ENCODE measurements at regions of chr4 and their contacts with region 1.

Region 1: DNA sequence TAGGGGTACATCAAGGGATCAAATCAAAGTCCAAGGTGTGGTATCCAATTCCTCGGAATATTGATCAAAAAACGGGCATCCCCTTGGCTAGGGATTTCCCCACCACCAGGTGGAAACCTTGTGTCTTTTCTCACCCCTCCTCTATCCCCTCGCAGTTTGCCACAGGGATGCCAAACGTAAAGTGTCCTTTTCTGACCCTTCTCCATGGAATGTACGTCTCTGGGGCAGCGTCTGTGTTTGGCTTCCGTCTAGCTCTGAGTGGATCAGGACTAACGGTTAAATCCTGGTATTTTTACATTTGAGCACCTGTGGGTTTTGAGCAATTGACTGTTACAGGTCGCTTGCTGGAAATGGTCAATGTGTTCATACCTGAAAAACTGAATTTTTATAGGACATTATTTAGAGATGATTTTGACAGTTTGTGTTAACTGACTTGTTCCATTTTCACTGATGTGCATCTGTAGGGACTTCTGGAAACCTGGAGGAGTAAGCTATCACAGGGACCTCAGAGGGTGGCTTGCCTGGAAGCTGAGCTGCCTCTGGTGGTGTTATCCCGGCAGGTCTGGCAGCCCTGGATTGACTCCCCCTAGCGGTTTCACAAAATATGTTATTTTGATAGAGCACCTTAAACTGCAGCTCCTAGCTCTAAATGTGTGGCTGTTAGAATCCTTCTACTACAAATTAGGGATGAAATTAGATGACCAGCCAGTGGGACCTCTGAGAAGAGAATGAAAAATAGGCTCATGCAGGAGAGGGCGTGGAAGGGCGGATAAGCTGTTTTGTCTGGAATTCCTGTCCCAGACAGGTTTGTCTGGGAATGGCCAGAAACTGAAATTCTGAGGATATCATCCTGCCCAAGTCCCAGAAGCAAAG is 8.8 kb upstream of the MGST2 start:
- DNase-seq: peak; percentile 63
- H3K4me3 Mint-ChIP-seq: peak overlapping the region; percentile 61
- H3K27ac Mint-ChIP-seq: peak overlapping the region; percentile 93
- H3K4me1 Mint-ChIP-seq: peaks cover 28% of the 10 kb centered on the region
- H3K27me3 Mint-ChIP-seq: peaks cover 7% of the 10 kb centered on the region

Region 2: GRCh38 chr4:139301113-139301820 is 355.6 kb before region 1 on chr4 and contains the start of gene NAA15:
- CTCF ChIA-PET with region 1: no interaction called
- POLR2A ChIA-PET with region 1: no interaction called
- intact Hi-C with region 1: loop called (anchors 2 kb)
- DNase-seq: peak; percentile 99
- H3K4me3 Mint-ChIP-seq: peak within 1 kb of the TSS; percentile 100
- H3K27ac Mint-ChIP-seq: peak within 1 kb of the TSS; percentile 100
- H3K4me1 Mint-ChIP-seq: peaks cover 51% of the 10 kb centered on the region
- H3K27me3 Mint-ChIP-seq: no peaks in the 10 kb centered on the region
- total RNA-seq, gene NAA15: 91.2 to 95.8 TPM

Region 3: GRCh38 chr4:139515531-139515958 is 141.3 kb before region 1 on chr4:
- CTCF ChIA-PET with region 1: no interaction called
- POLR2A ChIA-PET with region 1: no interaction called
- intact Hi-C with region 1: no loop called
- DNase-seq: no peak
- H3K4me3 Mint-ChIP-seq: no peak overlapping the region
- H3K27ac Mint-ChIP-seq: no peak overlapping the region
- H3K4me1 Mint-ChIP-seq: peaks cover 6% of the 10 kb centered on the region
- H3K27me3 Mint-ChIP-seq: no peaks in the 10 kb centered on the region

Region 4: DNA sequence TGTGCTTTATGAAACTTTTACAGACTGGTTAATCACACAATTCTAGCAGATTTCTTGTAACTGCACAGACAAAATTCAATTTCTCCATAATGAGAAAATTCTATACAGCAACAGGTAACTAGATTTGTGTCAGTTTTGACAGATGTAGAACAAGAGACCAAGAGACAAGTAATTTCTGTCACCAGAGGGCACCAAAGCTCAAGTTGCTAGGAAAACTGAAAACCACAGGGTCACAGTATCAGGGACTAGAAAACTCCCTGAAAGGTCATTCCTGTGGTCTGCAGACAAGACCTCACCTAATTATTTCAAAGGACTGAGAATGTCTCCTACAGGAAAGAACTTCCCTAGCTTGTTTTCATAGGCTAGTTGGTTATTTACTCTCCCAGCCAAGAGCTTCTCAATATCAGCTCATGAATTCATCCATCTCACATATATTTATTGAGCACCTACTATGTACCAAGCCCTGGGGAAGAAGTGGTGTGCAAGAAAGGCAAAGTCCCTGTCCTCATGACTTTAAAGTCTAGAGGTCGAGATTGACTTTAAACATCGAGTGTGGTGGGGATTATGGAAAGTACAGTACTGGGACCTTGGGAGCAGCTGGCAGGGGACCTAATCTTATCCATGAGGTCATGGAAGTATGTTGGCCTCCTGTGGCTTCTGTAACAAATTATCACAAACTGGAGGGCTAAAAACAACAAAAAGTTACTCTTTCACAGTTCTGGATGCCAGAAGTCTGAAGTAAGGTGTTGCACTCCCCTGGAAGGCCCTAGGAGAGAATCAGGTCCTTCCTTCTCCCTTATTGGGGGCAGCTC is 53.1 kb before region 1 on chr4:
- CTCF ChIA-PET with region 1: interaction called, 114 read pairs
- POLR2A ChIA-PET with region 1: no interaction called
- intact Hi-C with region 1: no loop called
- DNase-seq: peak; percentile 18
- H3K4me3 Mint-ChIP-seq: no peak overlapping the region
- H3K27ac Mint-ChIP-seq: no peak overlapping the region
- H3K4me1 Mint-ChIP-seq: peaks cover 12% of the 10 kb centered on the region
- H3K27me3 Mint-ChIP-seq: peaks cover 9% of the 10 kb centered on the region

Region 5: DNA sequence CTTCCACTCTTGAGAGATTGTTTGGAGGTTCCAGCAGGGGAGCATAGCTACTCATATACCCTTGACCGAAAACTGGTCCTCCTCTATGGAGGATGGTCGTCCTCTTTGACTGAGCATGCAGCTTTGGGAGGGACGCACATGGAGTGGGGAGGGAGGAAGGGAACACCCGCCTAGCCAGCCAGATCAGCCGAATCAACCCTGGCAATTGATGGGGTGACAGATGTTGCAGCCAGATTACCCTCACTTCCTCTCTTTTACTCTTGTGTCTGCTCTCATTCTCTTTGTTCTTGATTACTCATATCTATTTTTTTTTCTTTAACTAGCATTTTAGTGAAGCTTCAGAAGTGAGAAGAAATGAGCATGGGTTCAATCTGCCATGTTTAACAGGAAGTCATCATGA is 28.3 kb after region 1 on chr4:
- CTCF ChIA-PET with region 1: no interaction called
- POLR2A ChIA-PET with region 1: no interaction called
- intact Hi-C with region 1: loop called (anchors 2 kb)
- DNase-seq: no peak
- H3K4me3 Mint-ChIP-seq: no peak overlapping the region
- H3K27ac Mint-ChIP-seq: no peak overlapping the region
- H3K4me1 Mint-ChIP-seq: peaks cover 3% of the 10 kb centered on the region
- H3K27me3 Mint-ChIP-seq: no peaks in the 10 kb centered on the region

Region 6: GRCh38 chr4:139858436-139859225 is 201.8 kb after region 1 on chr4:
- CTCF ChIA-PET with region 1: interaction called, 4 read pairs
- POLR2A ChIA-PET with region 1: no interaction called
- intact Hi-C with region 1: loop called (anchors 1 kb)
- DNase-seq: peak; percentile 39
- H3K4me3 Mint-ChIP-seq: no peak overlapping the region
- H3K27ac Mint-ChIP-seq: peak overlapping the region; percentile 38
- H3K4me1 Mint-ChIP-seq: peaks cover 26% of the 10 kb centered on the region
- H3K27me3 Mint-ChIP-seq: peaks cover 23% of the 10 kb centered on the region

Region 7: DNA sequence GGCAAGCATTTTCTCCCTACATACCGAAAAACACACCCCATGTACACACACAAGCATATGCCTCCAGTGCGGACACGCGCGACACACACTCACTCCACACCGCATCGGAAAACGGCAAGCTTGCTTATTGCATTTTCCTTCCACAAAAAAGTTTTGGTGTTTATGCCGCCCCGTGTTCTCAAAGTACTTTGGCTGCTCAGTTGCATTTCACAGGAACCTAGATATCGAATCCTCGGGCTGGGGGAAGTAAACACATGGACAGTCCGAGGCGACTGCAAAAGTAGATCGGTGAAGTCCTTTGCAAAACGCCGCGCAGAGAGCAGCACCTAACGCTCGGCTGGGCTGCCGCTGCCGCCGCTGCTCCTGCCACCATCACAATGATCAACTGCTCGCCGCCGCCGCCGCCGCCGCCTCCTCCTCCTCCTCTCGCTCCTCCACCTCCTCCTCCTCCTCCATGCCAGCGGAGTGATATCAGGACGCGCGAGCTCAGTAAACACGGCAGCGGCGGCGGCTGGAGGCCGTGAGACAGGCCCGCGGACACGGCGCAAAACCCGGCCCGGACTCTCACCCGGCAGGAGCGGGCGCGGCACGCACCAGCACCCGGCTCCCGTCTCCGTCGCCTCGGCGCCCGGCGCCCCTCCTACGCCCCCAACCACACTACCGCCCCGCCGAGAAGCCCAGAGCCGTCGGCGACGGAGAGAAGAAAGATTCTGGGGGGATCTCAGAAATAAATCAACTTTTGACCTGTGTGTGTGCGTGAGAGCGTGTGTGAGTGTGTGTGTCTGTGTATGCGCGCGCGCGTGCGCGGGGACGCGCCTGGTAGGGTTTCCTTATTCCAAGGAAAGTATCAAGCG is 497.1 kb after region 1 on chr4 and contains the start of gene MAML3:
- CTCF ChIA-PET with region 1: no interaction called
- POLR2A ChIA-PET with region 1: no interaction called
- intact Hi-C with region 1: loop called (anchors 2 kb)
- DNase-seq: peak; percentile 88
- H3K4me3 Mint-ChIP-seq: peak within 1 kb of the TSS; percentile 78
- H3K27ac Mint-ChIP-seq: no peak within 1 kb of the TSS
- H3K4me1 Mint-ChIP-seq: peaks cover 45% of the 10 kb centered on the region
- H3K27me3 Mint-ChIP-seq: peaks cover 20% of the 10 kb centered on the region
- total RNA-seq, gene MAML3: 0.51 to 0.76 TPM

Region 8: DNA sequence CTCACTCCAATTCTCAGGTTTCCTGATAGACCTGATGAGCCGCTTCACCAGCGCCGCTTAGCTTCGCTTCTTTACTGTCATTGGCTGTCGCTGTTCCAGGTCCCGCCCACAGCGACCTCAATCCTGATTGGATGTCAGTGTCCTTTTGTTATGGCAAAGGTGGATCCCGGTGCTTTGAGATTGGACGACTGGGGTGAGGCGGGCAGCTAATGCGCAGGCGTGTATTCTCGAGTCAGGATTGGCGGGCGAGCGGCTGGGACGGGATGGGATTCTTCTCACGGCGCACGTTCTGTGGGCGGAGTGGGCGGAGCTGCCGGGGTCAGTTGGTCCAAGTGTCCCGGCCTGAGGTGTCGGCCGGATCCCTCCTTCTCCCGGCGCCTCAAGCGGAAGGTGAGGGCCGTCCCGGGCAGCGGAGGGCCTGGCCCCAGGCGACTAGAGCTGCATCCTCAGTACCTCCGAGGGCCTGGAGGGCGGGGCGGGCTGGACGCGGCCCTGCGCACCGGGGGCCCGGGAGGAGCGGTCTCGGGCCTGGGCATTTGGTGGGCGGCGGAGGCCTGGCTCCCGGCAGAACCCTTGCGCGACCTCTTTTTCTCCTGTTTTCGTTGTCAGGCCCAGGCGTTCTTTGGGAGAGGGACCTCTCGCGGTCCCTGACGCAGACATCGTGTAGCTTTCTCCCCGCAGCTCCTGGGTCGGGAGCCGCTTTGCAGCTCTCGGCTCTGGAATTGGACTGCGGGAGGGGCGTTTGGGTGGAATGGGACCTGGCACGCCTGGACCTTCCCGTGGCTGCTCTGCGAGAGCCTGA is 716.7 kb after region 1 on chr4 and contains the start of gene SCOC:
- CTCF ChIA-PET with region 1: interaction called, 3 read pairs
- POLR2A ChIA-PET with region 1: no interaction called
- intact Hi-C with region 1: loop called (anchors 5 kb)
- DNase-seq: peak; percentile 99
- H3K4me3 Mint-ChIP-seq: no peak within 1 kb of the TSS
- H3K27ac Mint-ChIP-seq: no peak within 1 kb of the TSS
- H3K4me1 Mint-ChIP-seq: peaks cover 32% of the 10 kb centered on the region
- H3K27me3 Mint-ChIP-seq: no peaks in the 10 kb centered on the region
- total RNA-seq, gene SCOC: 46.9 to 48.4 TPM